Dorsolateral prefrontal cortex (tissue), 120 donors: ENCODE measurements at regions of chr9 and their contacts with region 1.

Region 1: GRCh38 chr9:120856700-120857099 is 14.0 kb upstream of the PSMD5 start:
- DNase-seq: no peak
- H3K4me3 ChIP-seq: no peak overlapping the region
- H3K27ac ChIP-seq: peak overlapping the region in 4 of 59 donors; percentile 19 to 53 (median 40)
- H3K27me3 ChIP-seq: no peaks in the 10 kb centered on the region
- CTCF ChIP-seq: no peak

Region 2: DNA sequence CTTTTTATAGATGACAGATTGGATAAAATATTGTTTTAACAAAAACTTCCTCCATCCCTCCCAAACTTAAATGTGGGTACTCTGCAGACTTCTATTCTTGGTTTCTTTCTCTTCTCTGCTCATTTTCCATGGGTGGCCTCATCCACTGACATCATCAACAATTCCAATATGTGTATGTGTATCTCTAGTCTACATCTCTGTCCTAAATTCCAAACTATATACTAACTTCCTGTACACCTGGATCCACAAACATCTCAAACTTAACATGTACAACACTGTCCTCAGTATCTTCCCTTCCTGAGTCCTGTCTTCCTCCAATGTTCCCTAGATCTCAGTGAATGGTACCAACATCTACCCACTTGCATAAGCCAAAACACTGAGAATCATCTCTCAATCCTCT is 248.3 kb before region 1 on chr9:
- intact Hi-C with region 1: loop called in 1 of 2 experiments (anchors 10 kb)
- DNase-seq: no peak
- H3K4me3 ChIP-seq: no peak overlapping the region
- H3K27ac ChIP-seq: peak overlapping the region in 2 of 59 donors; percentile 7 to 34
- H3K27me3 ChIP-seq: no peaks in the 10 kb centered on the region
- CTCF ChIP-seq: no peak